CD4-positive, alpha-beta memory T cell (primary cell): ENCODE measurements at regions of chr2 and their contacts with region 1.

Region 1: GRCh38 chr2:186683341-186683740 is 10.5 kb upstream of the FAM171B start:
- DNase-seq: no peak
- H3K4me3 ChIP-seq: no peak overlapping the region
- H3K4me3 Mint-ChIP-seq: no peak overlapping the region
- H3K27ac ChIP-seq: no peak overlapping the region
- H3K27ac Mint-ChIP-seq: peak overlapping the region in 1 of 7 donors; percentile 39
- H3K4me1 ChIP-seq: no peaks in the 10 kb centered on the region
- H3K4me1 Mint-ChIP-seq: no peaks in the 10 kb centered on the region
- H3K27me3 ChIP-seq: no peaks in the 10 kb centered on the region
- H3K27me3 Mint-ChIP-seq: no peaks in the 10 kb centered on the region

Region 2: DNA sequence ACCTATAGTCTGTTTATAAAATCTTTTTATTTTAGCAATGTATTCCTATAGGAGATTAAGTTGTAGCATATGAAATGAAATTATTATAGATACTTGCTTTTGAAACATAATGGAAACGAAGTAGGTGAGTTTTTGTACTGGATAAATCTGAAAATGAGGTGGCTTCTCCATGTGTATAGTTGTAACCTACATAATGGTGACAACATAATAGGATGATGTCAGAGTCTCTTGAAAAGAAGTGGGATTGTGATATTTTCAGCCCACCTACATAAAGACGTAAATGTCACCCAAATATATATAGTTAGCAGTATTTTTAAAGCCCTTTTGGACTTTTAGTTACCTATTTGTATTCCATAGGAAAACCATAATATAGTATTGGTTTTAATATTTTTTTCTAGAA is 45.3 kb after region 1 on chr2:
- CTCF ChIA-PET with region 1: no interaction called
- POLR2A ChIA-PET with region 1: no interaction called
- intact Hi-C with region 1: loop called (anchors 1 kb)
- DNase-seq: no peak
- H3K4me3 ChIP-seq: no peak overlapping the region
- H3K4me3 Mint-ChIP-seq: no peak overlapping the region
- H3K27ac ChIP-seq: no peak overlapping the region
- H3K27ac Mint-ChIP-seq: no peak overlapping the region
- H3K4me1 ChIP-seq: no peaks in the 10 kb centered on the region
- H3K4me1 Mint-ChIP-seq: no peaks in the 10 kb centered on the region
- H3K27me3 ChIP-seq: no peaks in the 10 kb centered on the region
- H3K27me3 Mint-ChIP-seq: peaks cover 2% of the 10 kb centered on the region in 2 donors